WTC11 (cell line): ENCODE measurements at regions of chr19 and their contacts with region 1.

Region 1: GRCh38 chr19:46542428-46543230 is 47.0 kb upstream of the PNMA8B start:
- DNase-seq: peak; percentile 93
- ATAC-seq: peak; percentile 80
- H3K4me3 Mint-ChIP-seq: no peak overlapping the region
- H3K27ac Mint-ChIP-seq: no peak overlapping the region
- H3K4me1 Mint-ChIP-seq: peaks cover 5% of the 10 kb centered on the region
- H3K27me3 Mint-ChIP-seq: peaks cover 3% of the 10 kb centered on the region; the same call in 1 of the 2 replicates
- CTCF ChIP-seq: peak; percentile 92

Region 2: DNA sequence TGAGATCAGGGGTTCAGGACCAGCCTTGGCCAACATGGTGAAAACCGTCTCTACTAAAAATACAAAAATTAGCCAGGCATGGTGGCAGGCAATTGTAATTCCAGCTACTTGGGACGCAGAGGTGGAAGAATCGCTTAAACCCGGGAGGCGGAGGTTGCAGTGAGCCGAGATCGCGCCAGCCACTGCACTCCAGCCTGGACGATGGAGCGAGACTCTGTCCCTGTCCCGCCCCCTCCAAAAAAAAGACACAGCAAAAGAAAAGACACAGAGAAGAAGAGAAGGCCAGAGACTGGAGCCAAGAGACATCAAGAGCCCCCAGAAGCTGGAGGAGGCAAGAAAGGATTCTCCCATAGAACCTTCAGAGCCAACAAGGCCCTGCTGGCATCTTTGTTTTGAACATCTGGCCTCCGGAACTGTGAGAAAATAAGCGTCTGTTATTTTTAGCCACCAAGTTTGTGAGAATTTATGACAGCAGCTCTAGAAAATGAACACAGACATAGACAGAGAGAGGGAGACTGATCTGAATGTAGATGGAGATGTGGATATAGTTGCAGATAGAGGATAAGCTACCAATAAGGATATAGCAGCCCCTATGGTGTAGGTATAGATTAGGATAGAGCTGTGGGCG is 21.3 kb before region 1 on chr19:
- CTCF ChIA-PET with region 1: interaction called, 125 read pairs
- POLR2A ChIA-PET with region 1: no interaction called
- DNase-seq: no peak
- ATAC-seq: no peak
- H3K4me3 Mint-ChIP-seq: no peak overlapping the region
- H3K27ac Mint-ChIP-seq: no peak overlapping the region
- H3K4me1 Mint-ChIP-seq: no peaks in the 10 kb centered on the region
- H3K27me3 Mint-ChIP-seq: no peaks in the 10 kb centered on the region
- CTCF ChIP-seq: no peak

Region 3: GRCh38 chr19:46529622-46530462 is 12.8 kb before region 1 on chr19:
- CTCF ChIA-PET with region 1: interaction called, 125 read pairs
- POLR2A ChIA-PET with region 1: no interaction called
- DNase-seq: peak; percentile 81
- ATAC-seq: peak; percentile 48
- H3K4me3 Mint-ChIP-seq: peak overlapping the region; percentile 40
- H3K27ac Mint-ChIP-seq: peak overlapping the region; percentile 55; the same call in 1 of the 2 replicates
- H3K4me1 Mint-ChIP-seq: peaks cover 26% of the 10 kb centered on the region
- H3K27me3 Mint-ChIP-seq: peaks cover 3% of the 10 kb centered on the region; the same call in 1 of the 2 replicates
- CTCF ChIP-seq: peak; percentile 96